ENCODE measurements at regions of chr12 and their contacts with region 1.

Region 1: DNA sequence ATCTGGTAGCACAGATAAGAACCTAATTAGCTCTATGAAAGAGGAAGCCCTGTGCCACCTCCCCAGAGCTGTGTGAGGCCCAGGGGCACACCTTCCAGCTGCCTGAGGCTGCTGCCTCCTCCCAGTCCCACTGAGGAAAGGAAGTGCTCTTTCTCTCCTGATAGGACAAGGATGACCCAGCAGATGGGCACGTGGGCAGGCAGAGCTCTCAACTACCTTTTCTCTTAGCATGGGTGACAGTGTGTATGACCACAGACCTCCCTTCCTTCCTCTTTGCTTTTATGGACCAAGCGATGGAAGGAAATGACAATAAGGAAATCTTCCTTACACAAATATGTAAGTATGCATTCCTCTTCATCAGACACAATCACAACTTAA is 127.6 kb upstream of the AMIGO2 start:
- DNase-seq: peak in 28 of 35 experiments; percentile 22 to 62 (median 36)
- ATAC-seq: peak; percentile 53 to 70 (median 58)
- H3K4me3 ChIP-seq: peak overlapping the region; percentile 19 to 54
- H3K4me3 Mint-ChIP-seq: peak overlapping the region; percentile 66 to 95 (median 66)
- H3K27ac ChIP-seq: peak overlapping the region; percentile 79
- H3K27ac Mint-ChIP-seq: peak overlapping the region; percentile 94 to 96
- H3K4me1 ChIP-seq: peaks cover 58 to 72% of the 10 kb centered on the region in 2 experiments
- H3K4me1 Mint-ChIP-seq: peaks cover 82 to 89% (median 87%) of the 10 kb centered on the region in 3 donors
- H3K27me3 ChIP-seq: no peaks in the 10 kb centered on the region
- H3K27me3 Mint-ChIP-seq: no peaks in the 10 kb centered on the region

Region 2: DNA sequence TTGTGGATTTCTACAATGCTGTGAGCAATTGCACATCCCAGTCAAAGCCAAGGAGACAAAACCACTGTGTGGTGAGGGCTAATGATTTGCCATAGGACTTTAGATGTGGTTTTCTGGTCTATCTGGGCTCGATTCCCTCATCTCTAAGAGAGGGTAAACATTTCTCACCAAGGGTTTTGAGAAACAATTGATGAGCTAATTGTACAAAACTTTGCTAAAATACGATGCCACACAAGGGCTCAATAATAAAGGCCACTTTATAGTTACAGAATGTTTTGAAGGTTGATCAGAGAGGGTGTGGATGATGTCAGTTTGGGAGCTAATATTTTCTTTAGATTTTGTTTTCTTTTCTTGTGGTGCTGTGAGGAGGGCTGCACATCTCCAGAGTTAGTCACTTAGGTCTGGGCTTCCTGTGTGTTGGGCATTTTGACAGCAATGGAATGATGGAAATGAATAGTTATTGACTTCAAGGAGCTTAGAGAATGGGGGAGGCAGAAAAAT is 320.7 kb before region 1 on chr12:
- CTCF ChIA-PET with region 1: no interaction called
- POLR2A ChIA-PET with region 1: no interaction called
- DNase-seq: no peak
- ATAC-seq: no peak
- H3K4me3 ChIP-seq: no peak overlapping the region
- H3K4me3 Mint-ChIP-seq: no peak overlapping the region
- H3K27ac ChIP-seq: no peak overlapping the region
- H3K27ac Mint-ChIP-seq: no peak overlapping the region
- H3K4me1 ChIP-seq: no peaks in the 10 kb centered on the region
- H3K4me1 Mint-ChIP-seq: no peaks in the 10 kb centered on the region
- H3K27me3 ChIP-seq: no peaks in the 10 kb centered on the region
- H3K27me3 Mint-ChIP-seq: peaks cover 10 to 18% of the 10 kb centered on the region in 2 donors

Region 3: GRCh38 chr12:47021298-47021697 is 186.0 kb before region 1 on chr12:
- CTCF ChIA-PET with region 1: interaction called, 3 to 10 read pairs
- POLR2A ChIA-PET with region 1: no interaction called
- DNase-seq: peak in 3 of 35 experiments; percentile 3 to 71 (median 26)
- ATAC-seq: peak in 1 of 4 experiments; percentile 48
- H3K4me3 ChIP-seq: no peak overlapping the region
- H3K4me3 Mint-ChIP-seq: no peak overlapping the region
- H3K27ac ChIP-seq: no peak overlapping the region
- H3K27ac Mint-ChIP-seq: no peak overlapping the region
- H3K4me1 ChIP-seq: no peaks in the 10 kb centered on the region
- H3K4me1 Mint-ChIP-seq: no peaks in the 10 kb centered on the region
- H3K27me3 ChIP-seq: peaks cover 0 to 9% of the 10 kb centered on the region in 2 experiments
- H3K27me3 Mint-ChIP-seq: peaks cover 19 to 33% of the 10 kb centered on the region in 2 donors

Region 4: GRCh38 chr12:47054659-47055058 is 152.7 kb before region 1 on chr12:
- CTCF ChIA-PET with region 1: no interaction called
- POLR2A ChIA-PET with region 1: no interaction called
- DNase-seq: no peak
- ATAC-seq: no peak
- H3K4me3 ChIP-seq: no peak overlapping the region
- H3K4me3 Mint-ChIP-seq: no peak overlapping the region
- H3K27ac ChIP-seq: no peak overlapping the region
- H3K27ac Mint-ChIP-seq: no peak overlapping the region
- H3K4me1 ChIP-seq: no peaks in the 10 kb centered on the region
- H3K4me1 Mint-ChIP-seq: no peaks in the 10 kb centered on the region
- H3K27me3 ChIP-seq: no peaks in the 10 kb centered on the region
- H3K27me3 Mint-ChIP-seq: no peaks in the 10 kb centered on the region

Region 5: GRCh38 chr12:47178014-47178413 is 29.3 kb before region 1 on chr12:
- CTCF ChIA-PET with region 1: no interaction called
- POLR2A ChIA-PET with region 1: no interaction called
- DNase-seq: no peak
- ATAC-seq: no peak
- H3K4me3 ChIP-seq: no peak overlapping the region
- H3K4me3 Mint-ChIP-seq: no peak overlapping the region
- H3K27ac ChIP-seq: no peak overlapping the region
- H3K27ac Mint-ChIP-seq: no peak overlapping the region
- H3K4me1 ChIP-seq: no peaks in the 10 kb centered on the region
- H3K4me1 Mint-ChIP-seq: peaks cover 26 to 36% (median 32%) of the 10 kb centered on the region in 3 donors
- H3K27me3 ChIP-seq: no peaks in the 10 kb centered on the region
- H3K27me3 Mint-ChIP-seq: no peaks in the 10 kb centered on the region

Region 6: GRCh38 chr12:47190271-47190750 is 17.0 kb before region 1 on chr12:
- CTCF ChIA-PET with region 1: interaction called in 1 of 2 experiments, 16 read pairs
- POLR2A ChIA-PET with region 1: interaction called, 5 to 18 read pairs
- DNase-seq: no peak
- ATAC-seq: no peak
- H3K4me3 ChIP-seq: no peak overlapping the region
- H3K4me3 Mint-ChIP-seq: peak overlapping the region in 2 of 3 donors; percentile 34 to 74
- H3K27ac ChIP-seq: peak overlapping the region; percentile 67
- H3K27ac Mint-ChIP-seq: peak overlapping the region; percentile 91 to 99
- H3K4me1 ChIP-seq: peaks cover 41 to 60% of the 10 kb centered on the region in 2 experiments
- H3K4me1 Mint-ChIP-seq: peaks cover 86 to 92% (median 90%) of the 10 kb centered on the region in 3 donors
- H3K27me3 ChIP-seq: no peaks in the 10 kb centered on the region
- H3K27me3 Mint-ChIP-seq: no peaks in the 10 kb centered on the region

Region 7: DNA sequence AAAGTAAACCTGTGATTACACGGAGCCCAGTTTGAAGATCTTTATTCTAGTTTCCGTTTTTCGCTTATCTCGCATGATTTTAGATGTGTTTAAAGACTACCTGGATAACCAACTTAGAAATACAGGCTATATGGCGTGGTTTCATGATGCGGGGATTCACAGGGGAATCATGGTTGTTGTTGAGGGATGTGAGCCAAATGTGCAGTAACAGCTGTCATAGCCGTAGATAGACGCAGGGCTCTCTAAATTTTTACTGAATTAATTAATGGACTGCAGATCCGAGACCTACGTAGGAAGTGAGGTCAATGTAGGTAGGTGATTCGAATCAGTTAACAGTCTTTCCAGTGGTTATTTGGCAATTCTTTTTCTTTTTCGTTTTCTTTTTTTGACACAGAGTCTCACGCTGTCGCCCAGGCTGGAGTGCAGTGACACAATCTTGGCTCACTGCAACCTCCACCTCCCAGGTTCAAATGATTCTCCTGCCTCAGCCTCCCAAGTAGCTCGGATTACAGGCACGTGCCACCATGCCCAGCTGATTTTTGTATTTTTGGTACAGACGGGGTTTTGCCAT is 17.3 kb after region 1 on chr12:
- CTCF ChIA-PET with region 1: interaction called, 3 to 12 read pairs
- POLR2A ChIA-PET with region 1: interaction called, 3 to 6 read pairs
- DNase-seq: no peak
- ATAC-seq: no peak
- H3K4me3 ChIP-seq: no peak overlapping the region
- H3K4me3 Mint-ChIP-seq: peak overlapping the region; percentile 21 to 79 (median 55)
- H3K27ac ChIP-seq: no peak overlapping the region
- H3K27ac Mint-ChIP-seq: peak overlapping the region; percentile 78 to 83
- H3K4me1 ChIP-seq: peaks cover 33 to 76% of the 10 kb centered on the region in 2 experiments
- H3K4me1 Mint-ChIP-seq: peaks cover 79 to 89% (median 85%) of the 10 kb centered on the region in 3 donors
- H3K27me3 ChIP-seq: no peaks in the 10 kb centered on the region
- H3K27me3 Mint-ChIP-seq: no peaks in the 10 kb centered on the region

Region 8: GRCh38 chr12:47307680-47308399 is 100.5 kb after region 1 on chr12:
- CTCF ChIA-PET with region 1: interaction called in 1 of 2 experiments, 10 read pairs
- POLR2A ChIA-PET with region 1: interaction called, 4 to 6 read pairs
- DNase-seq: peak; percentile 23 to 79 (median 45)
- ATAC-seq: peak; percentile 89 to 96 (median 90)
- H3K4me3 ChIP-seq: peak overlapping the region; percentile 54 to 62
- H3K4me3 Mint-ChIP-seq: peak overlapping the region; percentile 87 to 92 (median 88)
- H3K27ac ChIP-seq: peak overlapping the region; percentile 40
- H3K27ac Mint-ChIP-seq: peak overlapping the region; percentile 96
- H3K4me1 ChIP-seq: peaks cover 0 to 14% of the 10 kb centered on the region in 2 experiments
- H3K4me1 Mint-ChIP-seq: peaks cover 33 to 41% (median 40%) of the 10 kb centered on the region in 3 donors
- H3K27me3 ChIP-seq: no peaks in the 10 kb centered on the region
- H3K27me3 Mint-ChIP-seq: no peaks in the 10 kb centered on the region

Region 9: DNA sequence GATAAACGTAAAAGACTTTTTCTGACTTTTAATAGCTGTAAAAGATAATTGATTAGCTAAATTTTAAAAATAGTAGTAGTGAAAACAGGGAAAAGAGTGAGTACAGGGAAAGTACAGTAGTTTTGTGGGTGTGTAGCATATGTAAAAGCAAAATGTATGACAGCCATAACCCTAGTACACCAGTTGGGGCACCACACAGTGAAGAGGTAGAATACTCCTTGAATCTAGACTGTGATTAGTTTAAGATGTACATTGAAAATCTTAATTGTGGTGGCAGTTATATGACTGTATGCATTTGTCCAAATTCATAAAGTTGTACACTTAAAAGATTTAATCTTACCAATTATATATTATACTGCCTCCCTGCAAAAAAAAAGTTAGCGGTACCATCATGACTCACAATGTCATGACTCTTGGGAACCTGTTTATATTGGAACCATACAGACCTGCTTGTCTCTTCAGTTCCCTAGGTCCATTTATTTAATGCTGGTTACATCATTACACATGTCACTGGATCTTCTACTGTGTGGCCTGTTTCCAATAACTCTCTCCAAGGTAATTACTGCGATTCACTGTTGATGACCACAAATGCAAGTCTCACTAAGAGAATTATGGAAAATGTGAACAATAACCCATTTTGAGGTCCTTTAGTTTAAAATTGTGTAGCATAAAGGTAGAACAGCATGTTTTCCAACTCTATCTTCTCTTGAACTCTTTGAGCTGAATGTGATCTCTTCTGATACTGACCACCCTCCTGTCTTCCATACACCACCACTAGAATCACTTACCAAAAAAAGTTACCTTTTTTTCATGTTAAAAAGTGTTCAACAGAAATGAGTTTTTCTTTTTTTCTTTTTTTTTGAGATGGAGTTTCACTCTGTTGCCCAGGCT is 136.6 kb after region 1 on chr12:
- CTCF ChIA-PET with region 1: no interaction called
- POLR2A ChIA-PET with region 1: no interaction called
- DNase-seq: no peak
- ATAC-seq: no peak
- H3K4me3 ChIP-seq: no peak overlapping the region
- H3K4me3 Mint-ChIP-seq: no peak overlapping the region
- H3K27ac ChIP-seq: no peak overlapping the region
- H3K27ac Mint-ChIP-seq: peak overlapping the region in 1 of 2 donors; percentile 3
- H3K4me1 ChIP-seq: peaks cover 0 to 6% of the 10 kb centered on the region in 2 experiments
- H3K4me1 Mint-ChIP-seq: peaks cover 6 to 23% (median 15%) of the 10 kb centered on the region in 3 donors
- H3K27me3 ChIP-seq: no peaks in the 10 kb centered on the region
- H3K27me3 Mint-ChIP-seq: no peaks in the 10 kb centered on the region

Region 10: GRCh38 chr12:47397664-47398281 is 190.4 kb after region 1 on chr12:
- CTCF ChIA-PET with region 1: interaction called, 3 to 21 read pairs
- POLR2A ChIA-PET with region 1: interaction called in 1 of 2 experiments, 3 read pairs
- DNase-seq: peak in 21 of 35 experiments; percentile 22 to 73 (median 29)
- ATAC-seq: peak; percentile 88 to 90 (median 89)
- H3K4me3 ChIP-seq: no peak overlapping the region
- H3K4me3 Mint-ChIP-seq: peak overlapping the region; percentile 18 to 49 (median 36)
- H3K27ac ChIP-seq: peak overlapping the region; percentile 22
- H3K27ac Mint-ChIP-seq: peak overlapping the region; percentile 87 to 93
- H3K4me1 ChIP-seq: peaks cover 5 to 29% of the 10 kb centered on the region in 2 experiments
- H3K4me1 Mint-ChIP-seq: peaks cover 41 to 70% (median 49%) of the 10 kb centered on the region in 3 donors
- H3K27me3 ChIP-seq: no peaks in the 10 kb centered on the region
- H3K27me3 Mint-ChIP-seq: no peaks in the 10 kb centered on the region

Measured in T-cell (primary cell).